ENCODE measurements at regions of chr18 and their contacts with region 1.

Region 1: DNA sequence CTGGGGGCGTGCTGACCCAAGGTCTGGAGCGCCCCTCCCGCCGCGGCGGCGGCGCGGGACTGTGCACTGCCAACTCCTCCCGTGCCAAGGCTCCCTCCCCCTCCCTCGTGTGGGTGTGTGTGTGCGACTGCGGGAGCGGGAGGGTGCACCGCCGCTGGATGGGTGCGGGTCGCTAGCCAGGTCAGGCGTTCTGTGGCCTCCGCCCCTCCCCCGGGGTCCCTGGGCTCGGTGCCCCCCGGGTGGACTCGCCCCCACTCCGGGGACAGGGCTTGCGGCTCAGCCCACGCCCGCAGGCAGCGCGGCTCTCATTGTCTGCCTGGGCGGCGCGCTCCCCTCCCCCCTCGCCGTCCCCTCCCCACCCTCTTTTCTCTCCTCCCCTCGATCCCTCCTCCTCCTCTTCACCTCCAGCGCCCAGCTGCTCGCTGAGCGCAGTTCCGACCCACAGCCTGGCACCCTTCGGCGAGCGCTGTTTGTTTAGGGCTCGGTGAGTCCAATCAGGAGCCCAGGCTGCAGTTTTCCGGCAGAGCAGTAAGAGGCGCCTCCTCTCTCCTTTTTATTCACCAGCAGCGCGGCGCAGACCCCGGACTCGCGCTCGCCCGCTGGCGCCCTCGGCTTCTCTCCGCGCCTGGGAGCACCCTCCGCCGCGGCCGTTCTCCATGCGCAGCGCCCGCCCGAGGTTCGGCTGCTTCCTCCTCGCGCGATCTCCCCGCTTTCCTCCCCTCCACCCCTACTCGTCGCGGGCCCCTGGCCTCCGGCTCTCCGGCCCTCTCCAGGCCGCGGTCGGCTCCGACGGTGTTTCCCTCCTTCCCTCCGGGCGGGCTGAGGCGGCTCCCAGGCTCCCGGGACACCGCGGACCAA is at the start of gene GATA6:
- DNase-seq: peak; percentile 92
- ATAC-seq: peak; percentile 85
- total RNA-seq, gene GATA6: 56.3 TPM

Region 2: GRCh38 chr18:21831413-21831831 is 337.8 kb before region 1 on chr18:
- intact Hi-C with region 1: loop called (anchors 5 kb)
- DNase-seq: no peak
- ATAC-seq: peak; percentile 75

Region 3: GRCh38 chr18:21997207-21998143 is 171.8 kb before region 1 on chr18:
- intact Hi-C with region 1: loop called (anchors 2 kb)
- DNase-seq: no peak
- ATAC-seq: peak; percentile 63

Region 4: DNA sequence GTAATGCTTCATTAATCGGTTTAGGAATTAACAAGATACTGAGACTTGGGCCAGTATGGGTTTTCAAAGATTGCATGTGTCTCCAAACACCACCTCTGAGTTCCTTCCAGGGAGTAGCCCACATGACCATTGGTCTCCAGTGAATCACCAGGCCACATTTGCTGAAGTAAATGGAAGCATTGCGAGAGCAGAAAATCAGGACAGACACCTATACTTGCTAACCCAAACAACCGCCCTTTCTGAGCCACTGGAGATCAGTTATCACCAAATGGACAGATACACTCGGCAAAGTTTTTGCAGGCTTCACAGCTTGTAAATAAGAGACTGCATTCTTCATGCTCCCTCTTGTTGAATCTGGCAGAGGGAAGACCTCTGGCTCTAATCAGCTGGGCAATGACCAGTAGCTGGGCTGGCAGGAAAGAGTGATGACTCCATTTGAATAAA is 41.1 kb after region 1 on chr18:
- intact Hi-C with region 1: no loop called
- DNase-seq: no peak
- ATAC-seq: peak; percentile 2

Region 5: GRCh38 chr18:22348521-22349316 is 179.5 kb after region 1 on chr18:
- intact Hi-C with region 1: loop called (anchors 2 kb)
- DNase-seq: peak; percentile 89
- ATAC-seq: peak; percentile 70

Region 6: GRCh38 chr18:22408059-22408458 is 238.8 kb after region 1 on chr18:
- intact Hi-C with region 1: no loop called
- DNase-seq: no peak
- ATAC-seq: no peak

Region 7: DNA sequence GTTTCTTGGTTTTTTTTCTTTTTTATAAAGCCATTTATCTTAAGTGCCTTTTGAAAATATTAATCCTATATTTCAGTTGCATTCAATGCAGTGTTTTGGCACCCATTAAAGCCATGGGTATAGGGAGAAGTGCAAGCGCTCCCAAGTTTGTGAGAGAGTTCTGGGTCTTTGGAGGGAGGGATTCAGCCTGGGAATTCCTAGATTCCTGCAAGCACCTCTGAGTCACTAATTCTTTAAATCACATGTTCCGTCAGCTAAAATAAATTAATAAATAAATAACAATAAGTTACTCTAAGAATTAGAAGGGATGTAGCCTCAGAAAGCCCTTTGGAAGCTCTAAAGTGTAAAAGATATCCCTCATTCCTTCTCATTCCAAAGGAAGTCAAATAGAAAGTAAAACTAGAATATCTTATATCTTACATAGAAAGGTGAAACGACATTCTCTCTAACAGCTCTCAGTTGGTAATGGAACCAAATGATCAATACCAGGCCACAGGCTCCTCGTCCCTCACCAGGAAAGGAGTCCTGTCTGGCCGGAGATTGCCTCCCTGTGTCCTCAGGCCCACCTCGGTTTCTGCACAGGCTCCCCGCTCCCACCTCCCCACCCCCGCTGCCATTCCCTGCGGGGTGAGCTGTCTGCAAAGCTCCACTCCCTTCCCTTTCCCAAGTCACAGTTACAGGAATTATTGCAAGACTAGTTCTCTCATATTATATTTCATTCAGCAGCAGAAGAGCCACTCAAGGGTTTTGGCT is 541.6 kb after region 1 on chr18:
- intact Hi-C with region 1: loop called (anchors 5 kb)
- DNase-seq: no peak
- ATAC-seq: peak; percentile 48

Measured in Right ventricle myocardium inferior (tissue), 1 donor.